AG04450 (cell line): ENCODE measurements at regions of chr7 and their contacts with region 1.

Region 1: DNA sequence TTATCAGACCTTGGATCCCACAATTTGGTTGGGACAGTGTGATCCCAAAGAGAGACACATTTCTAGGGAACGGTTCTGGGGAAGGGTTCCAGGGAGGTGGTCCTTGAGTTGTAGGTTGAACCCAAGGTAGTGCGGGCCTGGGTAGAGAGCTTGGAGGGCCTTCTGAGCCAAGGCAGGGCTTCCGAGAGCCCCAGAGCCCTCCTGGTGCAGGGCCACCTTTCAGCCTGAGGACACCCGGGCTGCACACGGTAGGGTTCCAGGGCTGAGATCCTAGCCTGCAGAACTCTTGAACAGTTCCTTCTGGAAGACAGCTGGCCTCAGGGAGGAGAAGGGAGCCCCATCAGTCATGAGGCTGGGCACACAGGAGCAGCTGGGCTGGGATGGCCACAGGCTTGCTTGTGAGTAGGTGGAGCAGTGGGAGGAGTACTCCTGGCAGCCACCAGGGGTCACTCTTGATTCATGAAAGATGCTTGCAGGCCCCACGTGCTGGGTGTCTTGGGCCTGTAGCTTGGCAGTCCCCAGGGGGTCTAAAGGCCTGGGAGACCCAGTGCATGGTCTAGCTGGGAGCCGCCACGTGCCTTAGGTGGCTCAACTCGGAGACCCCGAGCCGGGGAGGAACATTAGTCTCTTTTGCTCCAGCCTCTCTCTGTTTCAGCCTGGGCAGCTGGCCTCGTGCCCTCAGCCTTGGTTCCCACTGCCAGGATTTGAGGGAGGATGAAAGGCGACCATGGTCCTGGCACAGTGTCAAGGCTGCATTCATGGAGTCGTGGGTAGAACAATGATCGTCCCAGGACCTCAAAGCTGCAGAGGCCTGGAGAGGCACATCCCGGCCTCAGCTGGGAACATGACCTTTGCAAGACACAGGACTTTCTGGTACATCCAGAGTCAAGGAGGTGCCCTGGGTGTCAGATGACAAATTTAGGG is 381.6 kb downstream of the TYW1 start:
- DNase-seq: peak; percentile 29
- H3K4me3 ChIP-seq: no peak overlapping the region
- H3K27ac ChIP-seq: no peak overlapping the region
- H3K27me3 ChIP-seq: no peaks in the 10 kb centered on the region
- CTCF ChIP-seq: peak; percentile 81

Region 2: DNA sequence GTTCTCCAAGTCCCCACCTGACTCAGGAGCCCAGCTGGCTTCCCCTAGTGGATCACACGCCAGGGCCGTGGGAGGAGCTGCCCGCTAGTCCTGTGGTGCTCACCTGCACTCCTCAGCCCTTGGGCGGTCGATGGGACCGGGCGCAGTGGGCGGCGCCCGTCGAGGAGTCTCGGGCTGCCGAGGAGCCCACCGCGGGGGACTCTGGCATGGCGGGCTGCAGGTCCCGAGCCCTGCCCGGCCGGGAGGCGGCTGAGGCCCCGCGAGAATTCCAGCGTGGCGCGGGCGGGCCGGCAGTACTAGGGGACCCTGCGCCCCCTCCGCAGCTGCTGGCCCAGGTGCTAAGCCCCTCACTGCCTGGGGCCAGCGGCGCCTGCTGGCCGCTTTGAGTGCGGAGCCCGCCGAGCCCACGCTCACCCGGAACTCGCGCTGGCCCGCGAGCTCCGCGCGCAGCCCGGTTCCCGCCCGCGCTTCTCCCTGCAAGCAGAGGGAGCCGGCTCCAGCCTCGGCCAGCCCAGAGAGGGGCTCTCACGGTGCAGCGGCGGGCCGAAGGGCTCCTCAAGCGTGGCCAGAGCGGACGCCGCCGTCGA is 13.7 kb before region 1 on chr7:
- CTCF ChIA-PET with region 1: interaction called, 15 read pairs
- POLR2A ChIA-PET with region 1: no interaction called
- DNase-seq: no peak
- H3K4me3 ChIP-seq: no peak overlapping the region
- H3K27ac ChIP-seq: no peak overlapping the region
- H3K27me3 ChIP-seq: no peaks in the 10 kb centered on the region
- CTCF ChIP-seq: no peak

Region 3: GRCh38 chr7:67478066-67478465 is 99.9 kb after region 1 on chr7:
- CTCF ChIA-PET with region 1: no interaction called
- POLR2A ChIA-PET with region 1: no interaction called
- DNase-seq: no peak
- H3K4me3 ChIP-seq: no peak overlapping the region
- H3K27ac ChIP-seq: no peak overlapping the region
- H3K27me3 ChIP-seq: no peaks in the 10 kb centered on the region
- CTCF ChIP-seq: no peak